CD8-positive, alpha-beta memory T cell (primary cell): ENCODE measurements at regions of chr7 and their contacts with region 1.

Region 1: DNA sequence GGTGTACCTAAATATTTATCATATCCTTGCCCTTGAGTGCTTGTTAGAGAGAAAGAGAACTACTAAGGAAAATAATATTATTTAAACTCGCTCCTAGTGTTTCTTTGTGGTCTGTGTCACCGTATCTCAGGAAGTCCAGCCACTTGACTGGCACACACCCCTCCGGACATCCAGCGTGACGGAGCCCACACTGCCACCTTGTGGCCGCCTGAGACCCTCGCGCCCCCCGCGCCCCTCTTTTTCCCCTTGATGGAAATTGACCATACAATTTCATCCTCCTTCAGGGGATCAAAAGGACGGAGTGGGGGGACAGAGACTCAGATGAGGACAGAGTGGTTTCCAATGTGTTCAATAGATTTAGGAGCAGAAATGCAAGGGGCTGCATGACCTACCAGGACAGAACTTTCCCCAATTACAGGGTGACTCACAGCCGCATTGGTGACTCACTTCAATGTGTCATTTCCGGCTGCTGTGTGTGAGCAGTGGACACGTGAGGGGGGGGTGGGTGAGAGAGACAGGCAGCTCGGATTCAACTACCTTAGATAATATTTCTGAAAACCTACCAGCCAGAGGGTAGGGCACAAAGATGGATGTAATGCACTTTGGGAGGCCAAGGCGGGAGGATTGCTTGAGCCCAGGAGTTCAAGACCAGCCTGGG is 11.4 kb downstream of the SERPINE1 start:
- DNase-seq: peak; percentile 40 to 90 (median 71)
- H3K4me3 ChIP-seq: no peak overlapping the region
- H3K4me3 Mint-ChIP-seq: peak overlapping the region; percentile 0 to 72 (median 59)
- H3K27ac ChIP-seq: peak overlapping the region; percentile 52
- H3K27ac Mint-ChIP-seq: peak overlapping the region; percentile 38 to 87 (median 70)
- H3K4me1 ChIP-seq: peaks cover 7% of the 10 kb centered on the region
- H3K4me1 Mint-ChIP-seq: peaks cover 10 to 14% (median 12%) of the 10 kb centered on the region in 3 donors
- H3K27me3 ChIP-seq: no peaks in the 10 kb centered on the region
- H3K27me3 Mint-ChIP-seq: peaks cover 9 to 32% of the 10 kb centered on the region in 2 donors

Region 2: DNA sequence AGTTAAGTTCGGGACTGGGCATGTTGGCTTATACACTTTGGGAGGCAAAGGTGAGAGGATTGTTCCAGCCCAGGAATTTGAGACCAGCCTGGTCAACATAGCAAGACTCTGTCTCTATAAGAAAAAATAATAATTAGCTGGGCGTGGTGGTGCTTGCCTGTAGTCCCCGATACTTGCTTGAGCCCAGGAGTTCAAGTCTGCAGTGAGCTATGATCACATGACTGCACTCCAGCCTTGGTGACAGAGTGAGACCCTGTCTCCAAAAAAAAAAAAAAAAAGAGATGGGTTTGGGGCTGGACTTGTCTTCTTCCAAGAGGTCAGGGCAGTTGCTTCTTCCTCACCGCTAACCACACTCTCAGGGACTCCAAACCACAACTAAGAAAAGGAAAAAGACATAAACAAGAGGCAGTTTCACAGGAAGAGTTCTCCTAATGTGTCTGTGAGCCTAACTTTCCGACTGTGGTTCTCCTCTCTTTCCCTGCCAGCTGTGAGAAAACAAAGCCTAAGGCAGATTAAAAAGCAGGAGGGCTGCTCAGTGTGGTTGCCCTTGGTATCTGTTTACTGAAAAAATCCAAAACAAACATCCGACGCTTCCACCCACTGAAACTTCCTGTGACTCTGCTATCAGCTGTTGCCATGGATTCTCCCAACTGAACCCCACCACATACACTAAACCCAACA is 13.8 kb before region 1 on chr7:
- CTCF ChIA-PET with region 1: interaction called, 14 read pairs
- POLR2A ChIA-PET with region 1: no interaction called
- DNase-seq: no peak
- H3K4me3 ChIP-seq: no peak overlapping the region
- H3K4me3 Mint-ChIP-seq: no peak overlapping the region
- H3K27ac ChIP-seq: no peak overlapping the region
- H3K27ac Mint-ChIP-seq: peak overlapping the region in 1 of 8 donors; percentile 30
- H3K4me1 ChIP-seq: peaks cover 21% of the 10 kb centered on the region
- H3K4me1 Mint-ChIP-seq: peaks cover 25 to 38% (median 27%) of the 10 kb centered on the region in 3 donors
- H3K27me3 ChIP-seq: peaks cover 9% of the 10 kb centered on the region
- H3K27me3 Mint-ChIP-seq: peaks cover 53 to 77% of the 10 kb centered on the region in 2 donors

Region 3: GRCh38 chr7:101153969-101154692 is 15.8 kb after region 1 on chr7 and contains the start of gene AP1S1:
- CTCF ChIA-PET with region 1: interaction called, 38 read pairs
- POLR2A ChIA-PET with region 1: no interaction called
- DNase-seq: peak; percentile 79 to 96 (median 88)
- H3K4me3 ChIP-seq: peak within 1 kb of the TSS; percentile 66
- H3K4me3 Mint-ChIP-seq: peak within 1 kb of the TSS; percentile 79 to 92 (median 84)
- H3K27ac ChIP-seq: peak within 1 kb of the TSS; percentile 47
- H3K27ac Mint-ChIP-seq: peak within 1 kb of the TSS; percentile 43 to 93 (median 86)
- H3K4me1 ChIP-seq: peaks cover 14% of the 10 kb centered on the region
- H3K4me1 Mint-ChIP-seq: peaks cover 9 to 14% (median 14%) of the 10 kb centered on the region in 3 donors
- H3K27me3 ChIP-seq: no peaks in the 10 kb centered on the region
- H3K27me3 Mint-ChIP-seq: peaks cover 4 to 14% of the 10 kb centered on the region in 2 donors
- total RNA-seq, gene AP1S1: 42.6 to 43.6 TPM

Region 4: GRCh38 chr7:101165075-101165957 is 27.0 kb after region 1 on chr7 and contains the start of gene VGF:
- CTCF ChIA-PET with region 1: interaction called, 38 read pairs
- POLR2A ChIA-PET with region 1: interaction called, 3 read pairs
- DNase-seq: peak; percentile 87 to 94 (median 90)
- H3K4me3 ChIP-seq: peak within 1 kb of the TSS; percentile 50
- H3K4me3 Mint-ChIP-seq: peak within 1 kb of the TSS; percentile 52 to 88 (median 74)
- H3K27ac ChIP-seq: no peak within 1 kb of the TSS
- H3K27ac Mint-ChIP-seq: peak within 1 kb of the TSS in 7 of 8 donors; percentile 2 to 88 (median 65)
- H3K4me1 ChIP-seq: peaks cover 41% of the 10 kb centered on the region
- H3K4me1 Mint-ChIP-seq: peaks cover 35 to 60% (median 41%) of the 10 kb centered on the region in 3 donors
- H3K27me3 ChIP-seq: peaks cover 68% of the 10 kb centered on the region
- H3K27me3 Mint-ChIP-seq: peaks cover 63% of the 10 kb centered on the region in 2 donors
- total RNA-seq, gene VGF: 0.13 to 0.16 TPM

Region 5: GRCh38 chr7:101195884-101196283 is 57.5 kb after region 1 on chr7:
- CTCF ChIA-PET with region 1: interaction called, 81 read pairs
- POLR2A ChIA-PET with region 1: no interaction called
- DNase-seq: no peak
- H3K4me3 ChIP-seq: no peak overlapping the region
- H3K4me3 Mint-ChIP-seq: no peak overlapping the region
- H3K27ac ChIP-seq: no peak overlapping the region
- H3K27ac Mint-ChIP-seq: no peak overlapping the region
- H3K4me1 ChIP-seq: no peaks in the 10 kb centered on the region
- H3K4me1 Mint-ChIP-seq: peaks cover 0 to 5% (median 5%) of the 10 kb centered on the region in 3 donors
- H3K27me3 ChIP-seq: no peaks in the 10 kb centered on the region
- H3K27me3 Mint-ChIP-seq: peaks cover 9 to 25% of the 10 kb centered on the region in 2 donors

Region 6: GRCh38 chr7:101244375-101245146 is 106.2 kb after region 1 on chr7 and contains the start of gene FIS1:
- CTCF ChIA-PET with region 1: interaction called, 29 read pairs
- POLR2A ChIA-PET with region 1: no interaction called
- DNase-seq: peak; percentile 91 to 95 (median 92)
- H3K4me3 ChIP-seq: peak within 1 kb of the TSS; percentile 95
- H3K4me3 Mint-ChIP-seq: peak within 1 kb of the TSS; percentile 97 to 99 (median 98)
- H3K27ac ChIP-seq: peak within 1 kb of the TSS; percentile 91
- H3K27ac Mint-ChIP-seq: peak within 1 kb of the TSS; percentile 93 to 99 (median 97)
- H3K4me1 ChIP-seq: peaks cover 27% of the 10 kb centered on the region
- H3K4me1 Mint-ChIP-seq: peaks cover 30 to 60% (median 40%) of the 10 kb centered on the region in 3 donors
- H3K27me3 ChIP-seq: no peaks in the 10 kb centered on the region
- H3K27me3 Mint-ChIP-seq: peaks cover 0 to 2% of the 10 kb centered on the region in 2 donors
- total RNA-seq, gene FIS1: 137 to 139 TPM

Region 7: GRCh38 chr7:101287032-101287431 is 148.7 kb after region 1 on chr7:
- CTCF ChIA-PET with region 1: interaction called, 97 read pairs
- POLR2A ChIA-PET with region 1: no interaction called
- DNase-seq: no peak
- H3K4me3 ChIP-seq: no peak overlapping the region
- H3K4me3 Mint-ChIP-seq: no peak overlapping the region
- H3K27ac ChIP-seq: no peak overlapping the region
- H3K27ac Mint-ChIP-seq: no peak overlapping the region
- H3K4me1 ChIP-seq: peaks cover 3% of the 10 kb centered on the region
- H3K4me1 Mint-ChIP-seq: peaks cover 21 to 23% (median 22%) of the 10 kb centered on the region in 3 donors
- H3K27me3 ChIP-seq: peaks cover 3% of the 10 kb centered on the region
- H3K27me3 Mint-ChIP-seq: peaks cover 7 to 9% of the 10 kb centered on the region in 2 donors

Region 8: DNA sequence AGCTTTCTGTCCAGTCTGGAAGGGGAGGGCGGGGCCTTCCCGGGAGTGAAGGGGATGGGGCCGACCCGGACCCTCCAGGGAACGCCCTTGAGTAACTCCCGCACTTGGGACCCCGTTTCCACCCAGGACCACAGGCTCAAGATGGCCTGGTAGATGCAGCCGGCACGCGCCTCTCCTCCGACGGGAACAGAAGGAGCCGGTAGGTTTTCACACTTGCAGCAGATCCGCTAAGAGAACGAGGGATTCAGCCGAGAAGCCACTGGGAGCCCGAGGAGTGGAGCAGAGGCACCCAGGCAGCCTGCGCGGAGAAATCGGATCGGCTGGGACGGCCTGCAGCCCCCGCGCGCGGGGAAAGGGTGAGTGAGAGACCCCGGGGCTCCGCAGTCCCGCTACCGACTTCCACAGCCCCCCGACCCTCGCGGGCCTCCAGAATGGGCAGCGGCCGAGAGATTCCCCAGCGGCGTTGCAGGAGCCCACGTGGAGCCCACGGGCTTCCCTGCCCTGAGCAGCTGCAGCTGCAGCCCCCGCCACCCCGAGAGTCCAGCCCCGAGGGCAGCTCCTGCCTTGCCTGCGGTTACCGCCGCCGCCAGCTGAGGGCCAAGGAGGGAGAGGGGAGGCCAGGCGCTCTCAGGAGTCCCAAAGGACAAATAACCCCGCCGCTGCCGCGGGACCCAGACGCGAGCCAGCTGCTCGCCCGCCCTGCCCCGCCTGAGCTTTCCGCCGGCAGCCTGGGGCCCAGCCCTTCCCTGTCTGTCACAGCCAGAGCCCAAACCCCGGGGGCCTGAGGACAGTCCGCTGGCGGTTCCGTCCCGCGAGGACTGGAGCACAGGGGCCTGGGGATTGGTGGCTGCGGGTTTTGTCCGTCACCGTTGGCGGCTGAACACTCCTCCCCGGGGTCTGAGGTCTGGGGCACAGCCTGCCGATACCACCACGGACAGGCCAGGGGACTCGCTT is 161.4 kb after region 1 on chr7:
- CTCF ChIA-PET with region 1: no interaction called
- POLR2A ChIA-PET with region 1: no interaction called
- DNase-seq: no peak
- H3K4me3 ChIP-seq: no peak overlapping the region
- H3K4me3 Mint-ChIP-seq: peak overlapping the region in 3 of 7 donors; percentile 20 to 29 (median 24)
- H3K27ac ChIP-seq: no peak overlapping the region
- H3K27ac Mint-ChIP-seq: peak overlapping the region in 2 of 8 donors; percentile 24 to 61
- H3K4me1 ChIP-seq: no peaks in the 10 kb centered on the region
- H3K4me1 Mint-ChIP-seq: peaks cover 0 to 9% (median 4%) of the 10 kb centered on the region in 3 donors
- H3K27me3 ChIP-seq: peaks cover 25% of the 10 kb centered on the region
- H3K27me3 Mint-ChIP-seq: peaks cover 60 to 68% of the 10 kb centered on the region in 2 donors

Region 9: DNA sequence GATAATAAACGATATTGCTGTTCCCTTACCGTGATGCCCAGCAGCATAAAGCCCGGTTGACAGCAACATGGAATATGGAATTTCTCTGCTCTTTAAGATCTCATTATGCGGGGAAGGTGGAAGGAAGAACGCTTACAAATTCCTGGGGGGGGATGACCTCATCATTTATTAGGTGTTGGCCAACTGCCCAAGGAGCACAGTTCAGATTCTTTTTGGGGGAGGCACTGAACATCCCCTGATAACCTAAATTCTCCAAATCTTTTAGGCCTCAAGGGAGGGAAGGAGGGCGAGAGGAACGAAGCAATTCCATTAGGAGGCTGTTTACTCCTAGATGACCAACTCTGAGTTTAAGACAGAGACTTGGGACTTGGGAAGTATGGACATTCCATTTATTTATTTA is 219.1 kb after region 1 on chr7:
- CTCF ChIA-PET with region 1: no interaction called
- POLR2A ChIA-PET with region 1: no interaction called
- DNase-seq: no peak
- H3K4me3 ChIP-seq: no peak overlapping the region
- H3K4me3 Mint-ChIP-seq: no peak overlapping the region
- H3K27ac ChIP-seq: no peak overlapping the region
- H3K27ac Mint-ChIP-seq: no peak overlapping the region
- H3K4me1 ChIP-seq: no peaks in the 10 kb centered on the region
- H3K4me1 Mint-ChIP-seq: peaks cover 3 to 9% (median 6%) of the 10 kb centered on the region in 3 donors
- H3K27me3 ChIP-seq: peaks cover 4% of the 10 kb centered on the region
- H3K27me3 Mint-ChIP-seq: peaks cover 26 to 28% of the 10 kb centered on the region in 2 donors